Heart right ventricle (tissue), 16 donors: ENCODE measurements at regions of chr2 and their contacts with region 1.

Region 1: GRCh38 chr2:101151141-101151858 is at the start of gene TBC1D8:
- DNase-seq: peak; percentile 93 to 95
- ATAC-seq: peak; percentile 89 to 94 (median 92)
- H3K4me3 ChIP-seq: peak within 1 kb of the TSS; percentile 54 to 99 (median 82)
- H3K27ac ChIP-seq: peak within 1 kb of the TSS; percentile 80 to 96 (median 89)
- H3K4me1 ChIP-seq: peaks cover 7 to 75% (median 64%) of the 10 kb centered on the region in 9 donors
- H3K27me3 ChIP-seq: no peaks in the 10 kb centered on the region
- CTCF ChIP-seq: no peak
- total RNA-seq, gene TBC1D8: 42.6 to 69.5 (median 55.8) TPM

Region 2: GRCh38 chr2:100935372-100935752 is 215.9 kb before region 1 on chr2:
- intact Hi-C with region 1: loop called in 1 of 10 experiments (anchors 5 kb)
- DNase-seq: no peak
- ATAC-seq: peak; percentile 53 to 90 (median 80)
- H3K4me3 ChIP-seq: no peak overlapping the region
- H3K27ac ChIP-seq: peak overlapping the region; percentile 58 to 88 (median 74)
- H3K4me1 ChIP-seq: peaks cover 0 to 36% (median 26%) of the 10 kb centered on the region in 9 donors
- H3K27me3 ChIP-seq: no peaks in the 10 kb centered on the region
- CTCF ChIP-seq: no peak

Region 3: DNA sequence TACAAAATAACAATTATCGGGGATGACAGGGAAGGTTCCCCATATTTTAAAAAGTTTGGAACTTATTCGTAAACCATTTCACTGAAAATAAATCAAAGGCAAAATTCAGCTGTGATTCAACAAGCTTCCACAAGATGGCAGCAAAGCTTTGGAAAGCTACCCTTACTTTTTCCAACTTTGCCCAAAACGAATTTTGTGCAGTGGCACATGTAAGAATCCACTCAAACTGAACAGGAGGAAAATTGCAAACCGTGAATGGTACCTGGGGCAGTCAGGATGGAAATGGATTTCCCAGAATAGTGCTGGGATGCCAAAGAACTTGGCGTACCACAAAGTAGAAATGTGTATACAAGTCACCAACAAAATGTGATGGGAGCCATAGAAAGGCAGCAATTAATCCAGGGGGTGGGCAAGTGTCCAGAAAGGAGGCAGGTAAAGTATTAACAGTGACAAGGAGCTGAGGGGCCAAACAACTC is 138.6 kb before region 1 on chr2:
- intact Hi-C with region 1: loop called (anchors 1 to 5 kb)
- DNase-seq: peak in 1 of 2 donors; percentile 26
- ATAC-seq: no peak
- H3K4me3 ChIP-seq: no peak overlapping the region
- H3K27ac ChIP-seq: no peak overlapping the region
- H3K4me1 ChIP-seq: peaks cover 0 to 8% (median 0%) of the 10 kb centered on the region in 9 donors
- H3K27me3 ChIP-seq: no peaks in the 10 kb centered on the region
- CTCF ChIP-seq: peak; percentile 73 to 91 (median 81)

Region 4: DNA sequence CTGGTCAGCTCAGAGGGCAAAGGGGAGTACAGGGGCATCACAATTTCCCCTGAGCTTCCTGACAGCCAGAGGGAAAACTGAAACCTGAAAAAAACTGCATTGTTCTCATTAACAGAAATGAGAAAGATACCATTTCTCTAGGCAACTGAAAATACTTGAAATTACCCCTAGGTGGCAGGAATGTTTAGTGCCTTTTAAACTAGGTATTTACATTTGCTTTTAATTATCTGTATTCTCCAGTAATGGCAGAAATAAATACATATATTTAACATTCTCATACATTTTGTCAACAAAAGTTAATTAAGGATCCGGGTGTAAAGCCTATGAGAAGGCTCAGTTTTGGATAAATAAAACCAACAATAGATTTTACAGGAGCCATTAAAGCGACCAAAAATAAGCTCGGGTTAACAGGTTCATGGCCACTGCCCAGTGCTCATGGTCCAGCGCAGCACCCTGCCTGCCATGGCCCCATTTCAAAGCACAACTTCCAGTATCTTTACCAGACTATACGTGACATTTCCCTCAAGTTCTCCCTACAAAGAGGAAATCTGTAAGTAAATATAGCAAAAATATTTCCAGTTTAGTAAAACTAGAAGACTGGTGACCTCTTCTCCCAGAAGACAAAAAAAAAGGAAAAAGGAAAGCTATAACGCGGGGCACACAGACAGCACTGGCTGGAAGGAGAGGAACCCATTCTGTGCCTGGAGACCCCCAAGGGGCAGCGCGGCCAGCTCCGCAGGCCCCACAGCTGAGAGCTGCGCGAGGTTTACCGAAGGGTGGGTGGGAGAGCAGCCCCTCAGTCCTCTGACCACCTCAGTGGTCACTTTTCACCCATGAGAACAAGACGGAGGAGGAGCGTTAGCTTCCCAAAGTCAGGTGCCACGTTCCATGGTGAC is 114.5 kb before region 1 on chr2:
- intact Hi-C with region 1: loop called in 8 of 10 experiments (anchors 2 to 5 kb)
- DNase-seq: no peak
- ATAC-seq: no peak
- H3K4me3 ChIP-seq: no peak overlapping the region
- H3K27ac ChIP-seq: no peak overlapping the region
- H3K4me1 ChIP-seq: peaks cover 0 to 27% (median 4%) of the 10 kb centered on the region in 9 donors
- H3K27me3 ChIP-seq: no peaks in the 10 kb centered on the region
- CTCF ChIP-seq: peak in 8 of 9 donors; percentile 13 to 63 (median 52)

Region 5: GRCh38 chr2:101064868-101065549 is 86.3 kb before region 1 on chr2:
- intact Hi-C with region 1: loop called in 1 of 10 experiments (anchors 5 kb)
- DNase-seq: no peak
- ATAC-seq: peak in 6 of 8 donors; percentile 10 to 52 (median 34)
- H3K4me3 ChIP-seq: no peak overlapping the region
- H3K27ac ChIP-seq: peak overlapping the region in 8 of 10 donors; percentile 17 to 76 (median 38)
- H3K4me1 ChIP-seq: peaks cover 12 to 55% (median 41%) of the 10 kb centered on the region in 9 donors
- H3K27me3 ChIP-seq: no peaks in the 10 kb centered on the region
- CTCF ChIP-seq: no peak

Region 6: GRCh38 chr2:101205521-101205998 is 54.3 kb after region 1 on chr2:
- intact Hi-C with region 1: loop called in 3 of 10 experiments (anchors 2 to 5 kb)
- DNase-seq: peak in 1 of 2 donors; percentile 55
- ATAC-seq: peak; percentile 79 to 92 (median 88)
- H3K4me3 ChIP-seq: peak overlapping the region in 8 of 10 donors; percentile 1 to 38 (median 30)
- H3K27ac ChIP-seq: peak overlapping the region in 1 of 10 donors; percentile 65
- H3K4me1 ChIP-seq: peaks cover 0 to 16% (median 0%) of the 10 kb centered on the region in 9 donors
- H3K27me3 ChIP-seq: no peaks in the 10 kb centered on the region
- CTCF ChIP-seq: peak; percentile 13 to 69 (median 56)